Activated T-helper 1 cell treated with anti-CD3 and anti-CD28 coated beads, Interleukin-12 subunit alpha, Interleukin-12 subunit beta, Interleukin-2, Interleukin-4 antibody, amounts not matched to agents 30 ng/mL and 10 ng/mL and 1 ng/mL, durations not matched to agents 14 hours and 24 hours and 36 hours (primary cell): ENCODE measurements at regions of chr7 and their contacts with region 1.

Region 1: DNA sequence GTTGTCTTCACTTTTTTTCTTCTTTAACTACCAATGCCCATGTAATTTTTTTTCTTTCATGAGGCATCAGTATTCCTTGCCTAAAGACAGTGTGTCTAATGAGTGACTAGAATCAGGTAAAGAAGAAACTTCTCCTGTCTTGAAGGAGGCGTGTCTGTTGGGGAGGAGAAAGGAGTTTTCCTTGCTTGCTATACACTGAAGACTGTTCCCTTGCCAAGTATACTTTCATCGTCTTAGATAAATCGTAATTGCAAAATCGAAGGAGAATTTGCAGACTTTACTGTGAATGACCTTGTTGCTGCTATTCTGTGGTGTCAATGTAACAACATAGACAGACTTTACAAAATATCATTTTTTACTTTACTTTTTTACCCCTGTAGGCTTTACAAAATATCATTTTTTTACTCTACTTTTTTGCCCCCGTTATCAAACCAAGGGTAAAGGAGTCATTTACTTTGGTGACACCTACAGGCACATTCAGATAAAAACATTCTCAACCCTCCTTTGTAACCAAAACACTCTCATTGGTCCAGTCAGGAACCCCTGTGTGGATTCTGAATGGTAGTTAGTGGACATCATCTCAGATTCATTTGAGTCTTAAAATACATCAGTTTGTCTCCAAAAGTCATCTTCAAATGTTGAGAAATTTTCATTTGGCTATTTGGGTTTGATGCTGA is 232.4 kb downstream of the AHR start:
- DNase-seq: no peak
- H3K4me3 Mint-ChIP-seq: no peak overlapping the region
- H3K27ac Mint-ChIP-seq: no peak overlapping the region
- H3K4me1 Mint-ChIP-seq: peaks cover 10% of the 10 kb centered on the region
- H3K27me3 Mint-ChIP-seq: peaks cover 3% of the 10 kb centered on the region

Region 2: DNA sequence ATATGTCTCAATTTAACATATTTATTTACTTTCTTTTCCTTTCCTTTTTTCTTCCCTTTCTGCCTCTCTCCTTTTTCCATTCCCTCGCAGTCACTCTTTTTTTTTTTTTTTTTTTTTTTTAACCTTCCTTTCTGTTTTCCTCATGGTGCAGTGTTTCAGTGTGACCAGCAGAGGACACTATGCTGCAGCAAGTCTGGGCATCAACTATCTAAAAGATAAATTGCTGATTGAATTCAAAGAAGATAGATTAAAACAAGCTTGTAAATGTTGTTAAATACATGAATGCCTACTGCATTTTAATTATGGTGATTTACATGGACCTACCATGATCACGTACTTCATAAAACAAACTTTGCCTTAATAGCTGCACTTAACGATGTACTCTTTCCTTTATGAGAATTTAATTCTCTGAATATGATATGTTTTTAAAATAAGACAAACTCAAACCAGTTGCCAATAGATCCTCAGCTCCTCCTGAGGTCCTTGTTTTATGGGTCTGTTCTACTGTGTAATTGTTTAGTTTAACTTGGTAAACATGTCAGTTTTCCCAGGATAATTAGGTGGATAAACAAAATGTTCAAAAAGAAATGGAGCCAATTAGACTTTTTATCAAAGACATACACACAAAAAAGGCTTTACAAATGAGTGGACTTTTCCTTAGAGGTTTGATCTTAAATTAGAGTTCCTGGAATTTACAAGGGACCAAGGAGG is 548.1 kb before region 1 on chr7:
- intact Hi-C with region 1: loop called (anchors 1 kb)
- DNase-seq: no peak
- H3K4me3 Mint-ChIP-seq: no peak overlapping the region
- H3K27ac Mint-ChIP-seq: no peak overlapping the region
- H3K4me1 Mint-ChIP-seq: peaks cover 7% of the 10 kb centered on the region
- H3K27me3 Mint-ChIP-seq: peaks cover 18% of the 10 kb centered on the region

Region 3: DNA sequence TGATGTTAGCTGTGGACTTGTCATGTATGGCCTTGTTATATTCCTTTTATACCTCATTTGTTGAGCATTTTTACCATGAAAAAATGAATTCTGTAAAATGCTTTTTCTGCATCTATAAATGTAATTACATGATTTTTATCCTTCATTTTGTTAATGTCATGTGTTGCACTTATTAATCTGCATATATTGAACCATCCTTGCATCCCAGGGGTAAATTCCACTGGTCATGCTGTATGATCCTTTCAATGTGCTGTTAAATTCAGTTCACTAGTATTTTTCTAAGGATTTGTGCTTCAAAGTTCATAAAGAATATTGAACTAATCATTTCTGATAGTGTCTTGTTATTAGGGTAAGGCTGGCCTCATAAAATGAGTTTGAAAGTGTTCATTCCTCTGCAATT is 264.3 kb before region 1 on chr7:
- intact Hi-C with region 1: no loop called
- DNase-seq: no peak
- H3K4me3 Mint-ChIP-seq: no peak overlapping the region
- H3K27ac Mint-ChIP-seq: no peak overlapping the region
- H3K4me1 Mint-ChIP-seq: peaks cover 7% of the 10 kb centered on the region
- H3K27me3 Mint-ChIP-seq: no peaks in the 10 kb centered on the region

Region 4: GRCh38 chr7:17304926-17305325 is 226.0 kb before region 1 on chr7:
- intact Hi-C with region 1: loop called (anchors 5 kb)
- DNase-seq: no peak
- H3K4me3 Mint-ChIP-seq: peak overlapping the region; percentile 11
- H3K27ac Mint-ChIP-seq: peak overlapping the region; percentile 26
- H3K4me1 Mint-ChIP-seq: peaks cover 18% of the 10 kb centered on the region
- H3K27me3 Mint-ChIP-seq: no peaks in the 10 kb centered on the region

Region 5: DNA sequence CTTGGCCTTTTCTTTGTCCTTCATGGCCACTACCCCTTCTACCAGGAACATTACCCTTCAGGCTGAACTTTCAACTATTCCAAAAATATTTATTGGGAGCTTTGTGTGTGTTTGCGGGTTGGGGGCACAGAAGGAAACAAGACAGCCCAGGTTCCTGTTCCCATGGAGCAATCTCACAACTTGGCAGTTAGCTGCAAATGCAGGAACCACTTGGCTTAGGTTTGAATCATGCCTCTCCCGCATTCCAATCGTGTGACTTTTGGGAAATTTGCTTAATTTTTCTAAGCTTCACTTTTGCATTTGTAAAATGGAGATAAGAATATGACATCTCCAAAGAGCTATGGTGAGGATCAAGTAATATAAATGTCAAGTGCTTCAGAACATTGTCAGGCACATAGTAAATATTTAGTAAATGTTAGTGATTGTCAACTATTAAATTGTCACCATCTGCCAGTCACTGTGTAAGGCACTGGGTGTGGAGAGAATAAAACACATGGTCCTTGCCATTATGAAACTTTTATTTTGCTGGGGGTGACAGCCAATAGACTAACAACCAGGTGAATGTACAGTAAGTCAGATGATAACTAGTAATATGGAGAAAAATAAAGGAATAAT is 132.3 kb after region 1 on chr7:
- intact Hi-C with region 1: no loop called
- DNase-seq: no peak
- H3K4me3 Mint-ChIP-seq: no peak overlapping the region
- H3K27ac Mint-ChIP-seq: no peak overlapping the region
- H3K4me1 Mint-ChIP-seq: no peaks in the 10 kb centered on the region
- H3K27me3 Mint-ChIP-seq: peaks cover 2% of the 10 kb centered on the region